ENCODE measurements at regions of chr1 and their contacts with region 1.

Region 1: DNA sequence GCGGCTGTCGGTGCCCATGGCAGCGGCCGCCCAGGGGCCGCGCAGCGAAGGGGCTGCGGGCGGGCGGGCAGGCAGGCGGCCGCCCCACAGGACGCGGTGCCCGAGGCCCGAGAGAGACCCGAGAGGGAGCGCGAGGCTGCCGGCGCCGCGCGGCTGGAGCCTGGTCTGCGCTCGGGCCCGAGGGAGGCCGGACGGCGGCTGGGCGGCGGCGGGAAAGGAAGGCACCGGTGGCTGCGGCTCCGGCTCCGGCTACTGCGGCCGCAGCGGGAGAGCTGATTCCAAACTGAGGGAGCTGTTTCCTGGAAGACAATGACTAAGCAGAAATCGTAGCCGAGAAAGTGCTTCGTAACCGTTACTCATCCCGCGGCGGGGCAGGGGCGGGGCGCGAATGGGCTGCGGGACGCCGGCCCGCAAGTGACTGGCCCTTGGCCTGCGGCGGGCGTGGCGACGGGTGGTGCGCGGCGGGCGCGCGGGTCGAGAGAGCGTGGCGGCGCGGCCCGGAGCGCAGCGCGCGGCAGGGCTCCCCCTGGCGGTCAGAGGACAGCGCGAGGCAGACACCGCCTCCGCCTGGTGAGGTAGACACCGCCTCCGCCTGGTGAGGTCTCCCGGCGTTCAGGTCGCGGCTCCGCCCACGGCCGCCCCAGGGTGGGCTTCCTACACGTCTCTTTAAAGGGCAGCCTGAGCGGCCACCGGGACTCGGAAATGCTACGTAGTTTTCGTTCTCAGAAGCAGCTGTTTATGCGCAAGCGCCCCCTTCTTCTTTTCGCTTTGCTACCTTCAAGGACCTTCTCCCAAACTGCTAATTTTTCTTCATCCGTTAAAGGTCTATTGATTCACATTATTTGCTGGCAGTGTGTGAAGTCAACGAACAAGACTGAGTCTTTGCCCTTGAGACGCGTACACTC is at the start of gene GCLM:
- DNase-seq: peak; percentile 93
- H3K4me3 ChIP-seq: peak within 1 kb of the TSS; percentile 96
- H3K27ac ChIP-seq: peak within 1 kb of the TSS; percentile 39
- H3K4me1 ChIP-seq: peaks cover 43% of the 10 kb centered on the region
- CTCF ChIP-seq: peak; percentile 82
- total RNA-seq, gene GCLM: 7.0 and 10.7 TPM in 2 replicates

Region 2: DNA sequence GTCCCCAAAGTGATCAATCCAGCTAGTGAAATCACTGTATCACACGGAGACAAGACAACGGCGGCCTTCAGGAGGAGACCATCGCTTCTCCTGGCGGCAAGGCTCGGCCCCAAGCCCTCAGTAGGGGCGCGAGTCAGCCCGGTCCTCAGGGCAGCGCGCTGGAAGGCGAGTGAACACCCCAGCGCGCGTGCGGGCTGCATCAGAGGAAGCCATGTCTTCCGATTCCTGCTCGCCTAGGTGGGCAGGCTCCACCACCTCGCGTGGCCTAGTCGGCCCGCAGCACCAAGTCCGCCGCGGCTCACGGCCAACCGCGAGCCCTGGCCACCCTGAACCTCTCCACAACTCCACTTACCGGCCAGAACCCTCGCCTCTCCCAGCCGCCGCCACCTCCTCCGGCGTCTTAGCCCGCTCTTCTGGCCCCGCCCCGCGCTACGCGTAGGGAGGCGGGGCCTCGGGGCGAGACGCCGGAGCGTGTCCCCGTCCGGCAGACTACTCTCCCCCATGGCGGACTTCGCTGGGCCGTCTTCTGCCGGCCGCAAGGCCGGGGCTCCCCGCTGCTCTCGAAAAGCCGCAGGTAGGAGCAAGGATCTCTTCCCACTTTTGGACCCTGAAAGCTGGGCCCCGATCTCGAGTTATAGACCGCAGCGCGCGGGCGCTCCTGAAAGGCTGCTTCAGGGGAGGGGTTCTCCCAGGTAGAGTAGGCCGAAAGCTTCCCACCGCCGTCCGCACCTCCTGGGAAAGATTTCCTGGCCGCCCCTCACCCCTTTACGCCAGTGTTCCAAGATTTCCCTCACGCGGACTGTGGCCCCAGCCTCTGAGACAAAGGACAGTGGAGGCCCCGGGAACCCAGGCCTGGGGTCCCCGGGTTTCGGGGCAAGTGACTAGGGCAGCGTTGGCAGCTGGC is 1610.6 kb before region 1 on chr1 and contains the starts of genes GLMN and RPAP2:
- CTCF ChIA-PET with region 1: no interaction called
- POLR2A ChIA-PET with region 1: no interaction called
- intact Hi-C with region 1: loop called (anchors 2 kb)
- DNase-seq: peak; percentile 89
- H3K4me3 ChIP-seq: peak within 1 kb of the TSS; percentile 88
- H3K27ac ChIP-seq: peak within 1 kb of the TSS; percentile 56
- H3K4me1 ChIP-seq: peaks cover 18% of the 10 kb centered on the region
- CTCF ChIP-seq: 0 out of 2 replicates have a peak, but pooled peaks have one; percentile 3
- total RNA-seq, gene GLMN: 12.4 and 12.6 TPM in 2 replicates
- total RNA-seq, gene RPAP2: 2.2 and 8.6 TPM in 2 replicates

Region 3: GRCh38 chr1:93878889-93879586 is 30.4 kb before region 1 on chr1 and contains the start of gene DNTTIP2:
- CTCF ChIA-PET with region 1: no interaction called
- POLR2A ChIA-PET with region 1: interaction called, 6 read pairs
- intact Hi-C with region 1: loop called (anchors 2 kb)
- DNase-seq: peak; percentile 93
- H3K4me3 ChIP-seq: peak within 1 kb of the TSS; percentile 94
- H3K27ac ChIP-seq: peak within 1 kb of the TSS; percentile 51
- H3K4me1 ChIP-seq: peaks cover 30% of the 10 kb centered on the region
- CTCF ChIP-seq: no peak
- total RNA-seq, gene DNTTIP2: 39.7 and 47.4 TPM in 2 replicates

Region 4: DNA sequence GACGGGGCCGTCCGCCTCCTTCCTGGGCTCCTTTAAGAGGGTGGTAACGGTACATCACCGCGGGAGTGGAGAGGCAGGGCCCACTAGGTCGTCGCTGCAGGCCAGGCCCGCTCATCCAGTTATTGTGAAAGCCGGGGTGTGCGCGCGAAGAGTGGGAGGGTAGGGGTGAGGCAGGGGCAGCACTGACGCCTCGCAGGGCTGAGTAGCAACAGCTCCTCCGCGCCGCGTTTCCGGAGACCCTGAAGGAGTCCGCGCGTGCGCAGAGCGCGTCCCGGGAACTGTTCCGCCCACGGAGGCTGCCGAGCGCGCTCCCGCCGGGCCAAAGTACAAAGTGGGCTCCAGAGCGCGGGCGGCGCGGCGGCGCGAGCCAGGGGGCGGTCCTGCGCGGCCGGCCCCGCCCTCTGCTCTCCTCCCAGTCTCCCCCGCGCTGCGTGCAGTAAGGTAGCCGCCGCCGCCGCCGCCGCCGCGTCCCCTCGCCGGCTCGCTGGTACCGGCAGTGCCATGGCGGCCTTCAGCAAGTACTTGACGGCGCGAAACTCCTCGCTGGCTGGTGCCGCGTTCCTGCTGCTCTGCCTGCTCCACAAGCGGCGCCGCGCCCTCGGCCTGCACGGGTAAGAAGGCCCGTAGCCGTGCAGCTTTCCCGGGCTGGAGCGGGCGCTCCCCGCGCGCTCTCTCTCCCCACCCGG is 508.7 kb after region 1 on chr1 and contains the start of gene ABCD3:
- CTCF ChIA-PET with region 1: no interaction called
- POLR2A ChIA-PET with region 1: no interaction called
- intact Hi-C with region 1: loop called (anchors 1 kb)
- DNase-seq: peak; percentile 97
- H3K4me3 ChIP-seq: peak within 1 kb of the TSS; percentile 91
- H3K27ac ChIP-seq: peak within 1 kb of the TSS; percentile 35
- H3K4me1 ChIP-seq: peaks cover 30% of the 10 kb centered on the region
- CTCF ChIP-seq: no peak
- total RNA-seq, gene ABCD3: 18.3 and 21.1 TPM in 2 replicates